Left cardiac atrium (tissue), 4 donors: ENCODE measurements at regions of chr7 and their contacts with region 1.

Region 1: DNA sequence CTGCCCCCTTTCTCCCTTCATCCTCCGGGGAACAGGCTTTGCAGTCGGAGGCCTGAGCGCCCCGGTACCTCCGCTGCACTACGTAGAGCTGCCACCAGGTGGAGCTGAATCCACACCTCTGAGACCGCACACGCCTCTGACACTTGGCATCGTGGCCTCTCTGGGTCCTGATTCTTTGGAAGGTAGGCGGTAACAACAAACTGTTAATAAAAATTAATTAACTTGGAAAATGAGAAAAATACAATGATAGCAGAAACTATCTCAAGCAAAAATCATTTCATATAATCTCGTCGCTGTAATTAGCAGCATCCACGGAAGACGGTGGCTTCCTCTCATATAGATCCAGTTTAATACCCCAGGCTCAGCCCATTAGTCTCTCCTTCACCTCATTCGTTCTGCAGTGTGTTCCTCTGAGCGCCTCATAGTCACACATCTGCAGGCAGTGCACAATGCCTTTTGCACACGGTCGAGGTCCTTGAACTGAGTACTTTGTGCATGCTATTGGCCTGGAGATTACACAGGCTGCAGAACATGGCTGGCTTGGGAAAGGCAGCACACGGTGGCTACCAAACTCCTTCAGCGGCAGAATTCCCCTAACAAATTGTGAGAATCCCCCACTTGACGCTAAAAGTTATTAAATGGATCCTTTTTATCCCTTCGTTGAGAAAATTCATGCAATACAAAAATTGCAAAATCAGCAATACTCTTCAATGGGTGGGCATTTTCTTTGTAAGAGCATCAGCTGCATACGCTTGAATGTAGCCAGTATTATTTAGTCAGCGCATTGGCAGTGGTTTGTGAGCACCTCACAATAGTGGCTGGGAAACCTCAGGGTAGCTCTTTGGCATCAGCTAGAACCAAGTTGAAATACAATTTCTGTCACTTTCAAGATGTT is 18.7 kb downstream of the OR9A2 start:
- DNase-seq: peak; percentile 81
- ATAC-seq: peak; percentile 89 to 92

Region 2: GRCh38 chr7:142853739-142854371 is 154.4 kb before region 1 on chr7:
- intact Hi-C with region 1: loop called (anchors 2 to 10 kb)
- DNase-seq: peak; percentile 65
- ATAC-seq: peak; percentile 59 to 76

Region 3: GRCh38 chr7:142880876-142881505 is 127.3 kb before region 1 on chr7:
- intact Hi-C with region 1: loop called in 1 of 2 experiments (anchors 10 kb)
- DNase-seq: no peak
- ATAC-seq: peak in 1 of 2 donors; percentile 33

Region 4: GRCh38 chr7:143214789-143215679 is 206.8 kb after region 1 on chr7:
- intact Hi-C with region 1: loop called (anchors 1 to 2 kb)
- DNase-seq: peak; percentile 29
- ATAC-seq: peak; percentile 41 to 65